ENCODE measurements at regions of chr3 and their contacts with region 1.

Region 1: GRCh38 chr3:143775459-143775858 is 72.8 kb downstream of the SLC9A9 start:
- DNase-seq: peak; percentile 14
- ATAC-seq: peak; percentile 82
- H3K4me3 Mint-ChIP-seq: no peak overlapping the region
- H3K27ac Mint-ChIP-seq: no peak overlapping the region
- H3K4me1 Mint-ChIP-seq: peaks cover 3% of the 10 kb centered on the region
- H3K27me3 Mint-ChIP-seq: no peaks in the 10 kb centered on the region

Region 2: DNA sequence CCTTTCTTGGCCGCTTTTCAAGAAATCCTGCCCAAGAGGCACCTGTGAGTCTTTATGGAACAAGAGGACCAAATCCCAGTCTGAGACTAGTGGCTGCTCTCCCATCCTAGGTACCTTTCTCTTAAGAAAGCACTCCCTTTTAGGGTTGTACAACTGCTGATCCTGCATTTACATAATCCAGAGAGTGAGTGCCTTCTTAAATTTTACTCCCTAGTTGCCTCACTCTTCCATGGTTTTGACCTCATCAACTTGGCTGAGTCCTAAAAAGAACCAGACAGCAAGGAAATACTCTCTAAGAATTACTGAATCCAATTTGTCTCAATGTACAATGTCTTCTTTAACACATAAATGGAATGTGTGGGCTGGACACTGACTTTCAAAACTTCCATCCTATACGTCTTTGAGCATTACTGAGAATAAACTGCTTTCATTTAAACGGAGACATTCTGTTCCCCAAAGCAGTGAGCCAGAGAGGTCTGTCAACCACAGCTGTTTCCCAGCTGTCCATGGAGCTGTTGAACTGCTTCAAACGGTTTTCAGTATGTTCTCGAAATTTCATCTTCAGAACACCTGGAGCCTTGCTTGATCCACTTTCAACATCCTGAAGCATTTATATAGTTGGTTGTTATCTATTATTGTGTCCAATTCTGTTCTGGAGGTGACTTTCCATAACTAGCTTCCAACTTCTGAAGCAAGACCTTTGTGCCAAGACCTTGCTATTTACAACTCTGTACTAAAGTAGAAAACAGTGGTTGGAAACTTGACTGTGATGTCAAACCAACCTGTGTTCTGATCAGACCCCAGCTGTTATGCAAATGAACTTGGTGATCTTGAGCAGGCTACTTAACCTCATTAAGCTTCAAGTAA is 106.3 kb before region 1 on chr3:
- CTCF ChIA-PET with region 1: no interaction called
- POLR2A ChIA-PET with region 1: no interaction called
- intact Hi-C with region 1: no loop called
- DNase-seq: no peak
- ATAC-seq: peak; percentile 58
- H3K4me3 Mint-ChIP-seq: no peak overlapping the region
- H3K27ac Mint-ChIP-seq: peak overlapping the region; percentile 33
- H3K4me1 Mint-ChIP-seq: peaks cover 10% of the 10 kb centered on the region
- H3K27me3 Mint-ChIP-seq: no peaks in the 10 kb centered on the region

Region 3: GRCh38 chr3:143847787-143848631 is 72.5 kb after region 1 on chr3 and contains the start of gene SLC9A9:
- CTCF ChIA-PET with region 1: interaction called, 7 read pairs
- POLR2A ChIA-PET with region 1: no interaction called
- intact Hi-C with region 1: loop called (anchors 2 to 5 kb)
- DNase-seq: peak; percentile 60
- ATAC-seq: peak; percentile 93
- H3K4me3 Mint-ChIP-seq: peak within 1 kb of the TSS; percentile 80
- H3K27ac Mint-ChIP-seq: peak within 1 kb of the TSS; percentile 87
- H3K4me1 Mint-ChIP-seq: peaks cover 47% of the 10 kb centered on the region
- H3K27me3 Mint-ChIP-seq: no peaks in the 10 kb centered on the region
- total RNA-seq, gene SLC9A9: 1.4 to 1.6 TPM

Region 4: DNA sequence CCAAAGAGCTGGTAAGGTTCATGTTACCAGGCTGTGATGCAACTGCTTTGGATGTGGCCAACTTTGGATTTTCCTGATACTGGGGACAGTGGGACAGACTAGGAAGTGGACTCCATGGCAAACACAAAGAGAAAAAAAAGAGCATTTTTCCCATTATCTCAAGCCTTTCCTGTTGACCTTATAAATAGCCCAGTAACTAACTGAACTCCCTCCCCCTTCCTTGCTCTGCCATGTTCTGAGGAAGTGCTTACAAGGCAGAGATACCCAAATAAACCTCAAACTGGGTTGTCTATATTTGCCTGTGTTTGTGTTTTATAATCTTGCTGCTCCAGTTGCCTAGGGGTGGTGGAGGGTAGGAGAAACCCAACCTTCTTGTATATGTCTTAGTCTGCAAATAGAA is 100.1 kb after region 1 on chr3:
- CTCF ChIA-PET with region 1: interaction called, 3 read pairs
- POLR2A ChIA-PET with region 1: no interaction called
- intact Hi-C with region 1: loop called in 1 of 2 experiments (anchors 5 kb)
- DNase-seq: no peak
- ATAC-seq: no peak
- H3K4me3 Mint-ChIP-seq: no peak overlapping the region
- H3K27ac Mint-ChIP-seq: no peak overlapping the region
- H3K4me1 Mint-ChIP-seq: no peaks in the 10 kb centered on the region
- H3K27me3 Mint-ChIP-seq: no peaks in the 10 kb centered on the region

Region 5: GRCh38 chr3:143951351-143951971 is 176.0 kb after region 1 on chr3:
- CTCF ChIA-PET with region 1: no interaction called
- POLR2A ChIA-PET with region 1: no interaction called
- intact Hi-C with region 1: loop called (anchors 1 kb)
- DNase-seq: peak; percentile 51
- ATAC-seq: peak; percentile 47
- H3K4me3 Mint-ChIP-seq: no peak overlapping the region
- H3K27ac Mint-ChIP-seq: no peak overlapping the region
- H3K4me1 Mint-ChIP-seq: no peaks in the 10 kb centered on the region
- H3K27me3 Mint-ChIP-seq: peaks cover 3% of the 10 kb centered on the region

Measured in activated CD4-positive, alpha-beta T cell treated with anti-CD3 and anti-CD28 coated beads for 36 hours (primary cell).